ENCODE measurements at regions of chr7 and their contacts with region 1.

Region 1: DNA sequence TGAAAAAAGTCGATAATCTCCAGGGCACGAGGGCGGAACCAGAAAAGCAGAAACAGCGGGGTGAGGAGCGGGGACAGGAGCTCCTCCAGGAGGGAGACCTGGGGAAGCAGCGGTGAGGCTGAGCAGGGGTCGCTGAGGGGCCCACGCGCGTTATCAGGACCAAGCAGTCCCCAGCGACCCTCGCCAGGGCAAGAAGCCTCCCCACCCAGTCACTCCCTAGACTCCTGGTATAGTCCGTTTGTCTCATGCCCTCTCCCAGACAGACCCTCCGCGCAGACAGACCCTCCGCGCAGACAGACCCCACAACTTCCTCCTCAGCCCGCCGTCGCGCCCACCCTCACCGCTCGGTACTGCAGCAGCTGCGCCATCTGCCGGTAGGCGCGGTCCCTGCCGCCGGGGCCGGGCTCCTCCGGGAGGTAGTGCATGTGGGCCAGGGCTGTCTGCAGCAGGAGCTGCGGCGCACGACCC is 6.3 kb downstream of the ATG9B start:
- DNase-seq: no peak
- H3K4me3 ChIP-seq: peak overlapping the region; percentile 40
- H3K27ac ChIP-seq: no peak overlapping the region
- H3K27me3 ChIP-seq: peaks cover 49% of the 10 kb centered on the region
- CTCF ChIP-seq: peak; percentile 90

Region 2: GRCh38 chr7:150898475-150899011 is 119.4 kb before region 1 on chr7:
- CTCF ChIA-PET with region 1: interaction called, 18 read pairs
- POLR2A ChIA-PET with region 1: no interaction called
- DNase-seq: peak; percentile 29
- H3K4me3 ChIP-seq: no peak overlapping the region
- H3K27ac ChIP-seq: no peak overlapping the region
- H3K27me3 ChIP-seq: peaks cover 14% of the 10 kb centered on the region
- CTCF ChIP-seq: peak; percentile 90

Region 3: GRCh38 chr7:150962553-150963399 is 55.2 kb before region 1 on chr7:
- CTCF ChIA-PET with region 1: interaction called, 32 read pairs
- POLR2A ChIA-PET with region 1: no interaction called
- DNase-seq: no peak
- H3K4me3 ChIP-seq: no peak overlapping the region
- H3K27ac ChIP-seq: no peak overlapping the region
- H3K27me3 ChIP-seq: peaks cover 27% of the 10 kb centered on the region
- CTCF ChIP-seq: peak; percentile 91

Region 4: GRCh38 chr7:150994141-150994964 is 23.6 kb before region 1 on chr7:
- CTCF ChIA-PET with region 1: interaction called, 12 read pairs
- POLR2A ChIA-PET with region 1: no interaction called
- DNase-seq: no peak
- H3K4me3 ChIP-seq: no peak overlapping the region
- H3K27ac ChIP-seq: no peak overlapping the region
- H3K27me3 ChIP-seq: peaks cover 3% of the 10 kb centered on the region
- CTCF ChIP-seq: no peak

Region 5: DNA sequence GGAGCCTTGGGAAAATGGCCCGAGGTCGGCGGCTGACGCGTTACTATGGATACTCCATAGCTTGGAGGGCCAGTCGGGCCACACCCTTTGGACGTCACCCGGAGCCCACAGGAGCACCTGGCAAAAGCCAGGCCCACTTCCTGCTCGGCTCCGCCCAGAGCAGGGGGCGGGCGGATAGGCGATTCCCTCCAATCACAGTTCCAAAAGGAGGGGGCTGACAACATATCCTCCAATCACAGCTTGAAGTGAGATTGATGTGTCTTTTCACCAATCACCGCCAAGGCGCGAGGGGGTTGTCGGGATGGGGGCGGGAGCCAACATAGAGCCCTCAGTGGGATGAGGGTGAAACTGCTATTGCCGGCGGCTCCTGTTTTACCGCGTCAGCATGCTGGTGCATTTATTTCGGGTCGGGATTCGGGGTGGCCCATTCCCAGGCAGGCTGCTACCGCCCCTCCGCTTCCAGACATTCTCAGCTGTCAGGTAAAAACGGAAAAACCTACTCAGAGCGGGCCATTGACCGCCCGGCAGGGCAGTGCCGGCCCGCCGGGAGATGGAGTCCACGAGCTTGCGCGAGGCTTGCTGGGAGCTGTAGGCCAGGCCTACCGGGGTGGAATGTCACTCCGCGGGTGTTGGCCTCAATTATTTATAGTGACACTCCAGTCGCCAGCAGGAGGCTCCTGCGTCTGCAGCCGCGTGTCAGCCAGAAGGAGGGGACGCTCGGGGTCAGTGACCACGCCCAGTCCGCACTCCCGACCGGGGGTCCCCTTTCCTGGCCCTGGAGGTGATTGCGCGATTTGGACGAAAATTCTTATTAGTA is 10.4 kb after region 1 on chr7 and contains the start of gene ABCB8:
- CTCF ChIA-PET with region 1: interaction called, 13 read pairs
- POLR2A ChIA-PET with region 1: interaction called, 4 read pairs
- DNase-seq: peak; percentile 96
- H3K4me3 ChIP-seq: peak within 1 kb of the TSS; percentile 90
- H3K27ac ChIP-seq: peak within 1 kb of the TSS; percentile 39
- H3K27me3 ChIP-seq: peaks cover 5% of the 10 kb centered on the region
- CTCF ChIP-seq: peak; percentile 46
- polyA plus RNA-seq, gene ABCB8: 10.7 and 13.7 TPM in 2 replicates

Region 6: GRCh38 chr7:151172273-151173141 is 154.5 kb after region 1 on chr7:
- CTCF ChIA-PET with region 1: interaction called, 10 read pairs
- POLR2A ChIA-PET with region 1: no interaction called
- DNase-seq: peak; percentile 13
- H3K4me3 ChIP-seq: no peak overlapping the region
- H3K27ac ChIP-seq: no peak overlapping the region
- H3K27me3 ChIP-seq: peaks cover 54% of the 10 kb centered on the region
- CTCF ChIP-seq: peak; percentile 100

Measured in AG04450 (cell line).